Activated T-helper 2 cell treated with anti-CD3 and anti-CD28 coated beads, Interferon-gamma antibody, Interleukin-2, Interleukin-4, amounts not matched to agents 10 μg/mL and 5 μg/mL and 100 μg/mL, durations not matched to agents 14 hours and 24 hours and 36 hours (primary cell): ENCODE measurements at regions of chr14 and their contacts with region 1.

Region 1: DNA sequence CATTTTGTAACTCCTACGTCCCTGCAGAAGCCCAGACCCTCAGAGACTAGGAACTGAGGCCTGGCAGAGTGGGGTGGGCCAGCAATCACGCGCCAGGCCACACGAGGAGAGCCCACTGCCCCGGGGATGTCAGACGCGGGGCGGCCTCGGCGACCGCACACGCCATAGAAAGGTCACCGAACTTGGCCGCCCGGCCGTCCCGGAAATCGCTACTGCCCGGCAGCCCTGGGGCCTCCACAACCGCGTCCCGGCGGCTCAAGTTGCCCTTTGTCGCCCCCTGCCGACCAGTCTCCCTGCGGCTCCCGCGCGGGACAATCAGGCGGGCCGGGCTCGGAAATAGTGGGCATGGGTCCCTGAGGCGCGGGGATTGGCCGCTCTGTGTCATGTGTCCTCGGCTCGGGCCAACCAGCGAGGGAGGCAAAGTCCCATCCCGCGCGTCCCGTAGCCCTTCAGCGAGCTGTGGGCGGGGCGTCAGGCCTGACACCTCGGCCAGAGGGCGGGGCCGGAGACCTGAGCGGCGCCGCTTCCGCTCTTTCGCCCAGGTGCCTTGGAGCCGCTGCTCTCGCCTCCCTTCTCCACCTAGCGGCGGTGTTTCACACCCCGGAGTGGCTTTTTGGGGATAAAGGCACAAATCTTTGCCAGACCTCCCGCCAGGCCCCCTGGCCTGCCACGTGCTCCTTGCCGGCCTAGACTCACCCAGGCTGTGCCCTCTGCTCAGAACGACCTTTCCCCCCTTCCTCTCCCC is 33.4 kb upstream of the DEGS2 start:
- DNase-seq: peak; percentile 100
- H3K4me3 Mint-ChIP-seq: peak overlapping the region; percentile 64
- H3K27ac Mint-ChIP-seq: peak overlapping the region; percentile 84
- H3K4me1 Mint-ChIP-seq: peaks cover 9% of the 10 kb centered on the region
- H3K27me3 Mint-ChIP-seq: no peaks in the 10 kb centered on the region

Region 2: GRCh38 chr14:99654235-99654966 is 538.4 kb before region 1 on chr14:
- intact Hi-C with region 1: no loop called
- DNase-seq: no peak
- H3K4me3 Mint-ChIP-seq: no peak overlapping the region
- H3K27ac Mint-ChIP-seq: no peak overlapping the region
- H3K4me1 Mint-ChIP-seq: no peaks in the 10 kb centered on the region
- H3K27me3 Mint-ChIP-seq: peaks cover 26% of the 10 kb centered on the region

Region 3: DNA sequence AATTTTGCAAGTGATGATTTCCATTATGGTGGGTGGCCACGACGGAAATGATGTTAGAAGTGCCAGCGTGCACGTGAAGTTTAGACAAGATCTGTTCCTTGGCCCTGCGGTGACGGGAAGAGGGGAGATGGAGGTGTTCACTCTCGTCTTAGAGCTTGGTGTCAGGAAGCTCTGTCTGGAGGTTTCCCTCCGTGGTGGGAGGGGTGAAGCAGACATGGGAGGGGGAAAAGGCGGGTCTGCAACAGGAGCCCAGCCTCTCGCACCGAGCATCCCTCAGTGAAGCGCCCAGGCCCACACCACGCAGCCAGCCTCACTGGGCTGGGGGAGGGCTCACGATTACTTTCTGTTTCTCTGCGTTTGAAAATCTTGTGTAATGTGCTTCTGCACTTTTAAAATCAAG is 373.3 kb before region 1 on chr14:
- intact Hi-C with region 1: no loop called
- DNase-seq: no peak
- H3K4me3 Mint-ChIP-seq: no peak overlapping the region
- H3K27ac Mint-ChIP-seq: no peak overlapping the region
- H3K4me1 Mint-ChIP-seq: peaks cover 10% of the 10 kb centered on the region
- H3K27me3 Mint-ChIP-seq: peaks cover 51% of the 10 kb centered on the region

Region 4: GRCh38 chr14:100213956-100214774 is 21.3 kb after region 1 on chr14:
- intact Hi-C with region 1: loop called (anchors 1 kb)
- DNase-seq: peak; percentile 86
- H3K4me3 Mint-ChIP-seq: peak overlapping the region; percentile 81
- H3K27ac Mint-ChIP-seq: peak overlapping the region; percentile 83
- H3K4me1 Mint-ChIP-seq: peaks cover 16% of the 10 kb centered on the region
- H3K27me3 Mint-ChIP-seq: no peaks in the 10 kb centered on the region